Activated T-helper 2 cell treated with anti-CD3 and anti-CD28 coated beads, Interferon-gamma antibody, Interleukin-2, Interleukin-4, amounts not matched to agents 10 μg/mL and 5 μg/mL and 100 μg/mL, durations not matched to agents 14 hours and 24 hours and 36 hours (primary cell): ENCODE measurements at regions of chr5 and their contacts with region 1.

Region 1: DNA sequence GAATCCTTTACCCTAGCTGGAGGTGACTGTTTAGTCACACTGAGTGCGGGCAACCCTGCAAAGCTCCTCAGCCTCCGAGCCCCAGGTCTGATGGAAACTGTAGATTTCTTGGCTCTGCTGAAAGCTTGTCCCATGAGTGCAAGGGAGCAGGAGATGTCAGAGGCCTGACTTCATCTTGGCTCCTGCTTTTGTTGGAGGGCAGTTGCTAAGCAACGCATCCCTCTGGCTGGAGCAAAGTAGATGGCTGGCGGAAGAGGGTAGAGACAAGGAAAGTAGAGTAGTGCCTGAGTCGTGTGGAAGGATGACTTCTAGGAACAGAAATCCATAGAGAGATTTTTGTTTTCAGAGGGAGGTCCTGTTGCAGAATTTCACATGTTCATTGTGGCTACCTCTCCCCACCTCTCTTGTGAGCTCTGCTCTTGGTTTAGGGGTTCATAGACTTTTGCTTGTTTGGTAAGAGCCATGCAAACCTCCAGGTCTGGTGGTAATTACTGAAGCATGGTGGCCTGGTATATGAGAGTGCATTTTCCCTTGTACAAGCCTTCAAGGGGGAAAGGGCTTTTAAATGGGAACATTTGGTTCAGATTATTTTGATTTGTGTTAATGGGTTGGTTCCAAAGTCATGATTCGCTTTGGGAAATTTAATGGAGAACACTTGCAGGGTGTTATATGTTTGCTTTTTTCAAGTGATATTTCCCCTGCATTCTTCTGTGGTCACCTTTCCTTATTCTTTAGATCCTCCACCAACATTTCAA is 71.5 kb downstream of the ARHGAP26 start:
- DNase-seq: no peak
- H3K4me3 Mint-ChIP-seq: no peak overlapping the region
- H3K27ac Mint-ChIP-seq: no peak overlapping the region
- H3K4me1 Mint-ChIP-seq: peaks cover 33% of the 10 kb centered on the region
- H3K27me3 Mint-ChIP-seq: no peaks in the 10 kb centered on the region

Region 2: DNA sequence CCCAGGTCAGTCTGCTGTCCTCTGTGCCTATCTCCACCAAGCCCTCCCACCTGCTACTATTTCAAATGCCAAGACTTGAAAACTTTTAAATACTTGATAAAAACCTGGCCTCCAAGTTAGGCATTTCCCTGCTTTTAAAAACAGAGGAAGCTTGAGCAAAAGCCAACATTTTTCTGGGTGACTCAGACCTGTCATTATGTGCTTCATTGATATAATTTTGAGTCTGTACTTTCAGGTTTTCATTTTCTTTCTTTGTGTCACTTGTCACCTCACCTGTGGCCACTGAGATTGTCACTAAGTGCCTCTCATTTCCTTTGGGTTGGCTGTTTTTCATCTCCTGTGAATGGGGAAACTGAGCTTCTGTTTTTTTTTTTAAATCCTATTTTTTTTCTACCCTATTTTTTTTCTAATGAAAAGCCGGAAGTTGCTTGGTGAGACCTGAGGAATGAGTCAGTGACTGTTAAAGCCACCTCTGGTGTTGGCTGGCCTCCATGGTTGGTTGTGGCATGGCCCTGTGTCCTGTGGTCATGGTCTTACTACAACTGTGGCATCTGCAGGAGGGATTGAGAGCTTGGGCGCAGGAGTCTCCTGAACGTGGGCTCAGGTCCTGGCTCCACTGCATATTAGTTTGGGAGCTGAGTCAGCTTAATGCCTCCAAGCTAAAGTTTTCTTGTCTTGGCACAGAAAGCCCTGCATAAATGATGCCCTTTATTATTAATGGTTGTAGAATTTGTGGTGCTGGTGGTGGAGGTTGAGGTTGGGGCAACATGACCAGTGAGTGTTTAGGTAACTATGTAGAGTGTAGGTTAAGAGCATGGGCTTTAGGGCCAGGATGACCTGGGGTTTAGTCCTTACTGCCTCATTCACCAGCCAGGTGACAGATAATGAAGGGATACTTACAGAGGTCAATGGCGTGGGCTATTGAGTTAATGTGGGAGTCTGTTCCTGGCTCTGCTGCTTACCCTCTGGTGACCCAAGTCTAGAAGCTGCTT is 14.7 kb before region 1 on chr5:
- intact Hi-C with region 1: loop called (anchors 2 kb)
- DNase-seq: no peak
- H3K4me3 Mint-ChIP-seq: no peak overlapping the region
- H3K27ac Mint-ChIP-seq: peak overlapping the region; percentile 48
- H3K4me1 Mint-ChIP-seq: peaks cover 72% of the 10 kb centered on the region
- H3K27me3 Mint-ChIP-seq: no peaks in the 10 kb centered on the region

Region 3: DNA sequence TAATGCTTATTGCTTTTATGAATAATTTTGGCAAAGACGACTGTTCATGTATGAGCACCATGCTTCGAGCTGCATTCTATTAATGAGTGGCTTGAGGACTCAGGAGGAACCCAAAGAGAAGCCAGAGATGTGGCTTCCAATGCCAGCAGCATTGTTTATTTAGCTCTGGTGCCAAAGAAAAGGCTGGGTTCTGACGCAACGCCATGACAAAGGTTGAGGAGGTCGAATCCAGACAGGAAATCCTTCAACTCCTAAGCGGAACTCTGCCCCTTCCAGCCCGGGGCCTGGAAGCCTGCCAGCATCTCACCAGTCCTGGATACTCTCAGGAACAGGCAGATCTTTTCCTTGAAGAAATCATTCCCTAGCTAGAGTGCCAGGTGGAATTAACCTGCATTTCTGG is 32.8 kb after region 1 on chr5:
- intact Hi-C with region 1: no loop called
- DNase-seq: no peak
- H3K4me3 Mint-ChIP-seq: no peak overlapping the region
- H3K27ac Mint-ChIP-seq: no peak overlapping the region
- H3K4me1 Mint-ChIP-seq: peaks cover 7% of the 10 kb centered on the region
- H3K27me3 Mint-ChIP-seq: no peaks in the 10 kb centered on the region

Region 4: GRCh38 chr5:143576711-143577484 is 735.2 kb after region 1 on chr5:
- intact Hi-C with region 1: no loop called
- DNase-seq: no peak
- H3K4me3 Mint-ChIP-seq: no peak overlapping the region
- H3K27ac Mint-ChIP-seq: no peak overlapping the region
- H3K4me1 Mint-ChIP-seq: peaks cover 24% of the 10 kb centered on the region
- H3K27me3 Mint-ChIP-seq: peaks cover 2% of the 10 kb centered on the region